HCT116 (cell line): ENCODE measurements at regions of chr2 and their contacts with region 1.

Region 1: GRCh38 chr2:135052042-135052876 is at the start of gene RAB3GAP1:
- DNase-seq: peak; percentile 48
- ATAC-seq: peak; percentile 94
- H3K4me3 ChIP-seq: peak within 1 kb of the TSS; percentile 93 to 94
- H3K27ac ChIP-seq: peak within 1 kb of the TSS; percentile 68
- H3K4me1 ChIP-seq: peaks cover 9 to 12% of the 10 kb centered on the region in 2 experiments; a peak in 2 of 4 replicates
- H3K27me3 ChIP-seq: no peaks in the 10 kb centered on the region
- CTCF ChIP-seq: no peak
- POLR2A ChIP-seq: peak; percentile 85
- RAD21 ChIP-seq: no peak
- total RNA-seq, gene RAB3GAP1: 38.5 TPM

Region 2: DNA sequence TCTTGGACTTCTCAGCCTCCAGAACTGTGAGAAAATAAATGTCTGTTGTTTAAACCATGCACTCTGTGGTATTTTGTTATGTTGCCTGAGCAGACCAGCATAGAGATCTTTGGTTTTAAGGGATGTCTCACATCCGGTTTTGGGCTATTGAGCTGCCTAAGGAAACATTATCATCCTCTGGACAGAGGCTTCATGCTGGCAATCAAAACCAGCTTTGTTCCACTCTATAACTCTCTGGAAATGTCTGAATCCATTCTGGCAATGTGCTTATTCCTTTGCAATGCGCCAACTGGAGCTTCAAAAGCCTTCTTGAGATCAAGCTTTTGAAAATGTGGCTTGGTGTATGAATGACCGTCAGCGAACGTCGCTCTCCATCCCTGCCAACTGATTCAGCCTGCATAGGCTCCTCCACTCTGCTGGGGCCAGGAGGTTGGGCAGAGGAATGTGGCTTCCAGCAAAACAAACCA is 981.9 kb before region 1 on chr2:
- CTCF ChIA-PET with region 1: no interaction called
- POLR2A ChIA-PET with region 1: no interaction called
- RAD21 ChIA-PET with region 1: no interaction called
- intact Hi-C with region 1: no loop called
- DNase-seq: no peak
- ATAC-seq: no peak
- H3K4me3 ChIP-seq: no peak overlapping the region
- H3K27ac ChIP-seq: no peak overlapping the region
- H3K4me1 ChIP-seq: no peaks in the 10 kb centered on the region
- H3K27me3 ChIP-seq: peaks cover 9% of the 10 kb centered on the region; the same call in 1 of the 2 replicates
- CTCF ChIP-seq: no peak
- POLR2A ChIP-seq: no peak
- RAD21 ChIP-seq: no peak

Region 3: GRCh38 chr2:135072125-135072997 is 20.1 kb after region 1 on chr2:
- CTCF ChIA-PET with region 1: no interaction called
- POLR2A ChIA-PET with region 1: no interaction called
- RAD21 ChIA-PET with region 1: no interaction called
- intact Hi-C with region 1: no loop called
- DNase-seq: peak; percentile 31
- ATAC-seq: no peak
- H3K4me3 ChIP-seq: no peak overlapping the region
- H3K27ac ChIP-seq: no peak overlapping the region
- H3K4me1 ChIP-seq: no peaks in the 10 kb centered on the region
- H3K27me3 ChIP-seq: no peaks in the 10 kb centered on the region
- CTCF ChIP-seq: no peak
- POLR2A ChIP-seq: no peak
- RAD21 ChIP-seq: no peak

Region 4: GRCh38 chr2:135099802-135100483 is 47.7 kb after region 1 on chr2:
- CTCF ChIA-PET with region 1: no interaction called
- POLR2A ChIA-PET with region 1: no interaction called
- RAD21 ChIA-PET with region 1: no interaction called
- intact Hi-C with region 1: no loop called
- DNase-seq: no peak
- ATAC-seq: no peak
- H3K4me3 ChIP-seq: no peak overlapping the region
- H3K27ac ChIP-seq: no peak overlapping the region
- H3K4me1 ChIP-seq: no peaks in the 10 kb centered on the region
- H3K27me3 ChIP-seq: no peaks in the 10 kb centered on the region
- CTCF ChIP-seq: no peak
- POLR2A ChIP-seq: no peak
- RAD21 ChIP-seq: no peak

Region 5: GRCh38 chr2:135531231-135532228 is 479.3 kb after region 1 on chr2 and contains the start of gene R3HDM1:
- CTCF ChIA-PET with region 1: no interaction called
- POLR2A ChIA-PET with region 1: no interaction called
- RAD21 ChIA-PET with region 1: no interaction called
- intact Hi-C with region 1: loop called (anchors 5 kb)
- DNase-seq: peak; percentile 100
- ATAC-seq: peak; percentile 85
- H3K4me3 ChIP-seq: peak within 1 kb of the TSS; percentile 80 to 89
- H3K27ac ChIP-seq: peak within 1 kb of the TSS; percentile 71
- H3K4me1 ChIP-seq: peaks cover 7 to 24% of the 10 kb centered on the region in 2 experiments
- H3K27me3 ChIP-seq: no peaks in the 10 kb centered on the region
- CTCF ChIP-seq: no peak
- POLR2A ChIP-seq: peak; percentile 48
- RAD21 ChIP-seq: peak; percentile 48
- total RNA-seq, gene R3HDM1: 43.1 TPM

Region 6: GRCh38 chr2:135638825-135639224 is 586.6 kb after region 1 on chr2:
- CTCF ChIA-PET with region 1: no interaction called
- POLR2A ChIA-PET with region 1: no interaction called
- RAD21 ChIA-PET with region 1: no interaction called
- intact Hi-C with region 1: no loop called
- DNase-seq: no peak
- ATAC-seq: no peak
- H3K4me3 ChIP-seq: no peak overlapping the region
- H3K27ac ChIP-seq: no peak overlapping the region
- H3K4me1 ChIP-seq: no peaks in the 10 kb centered on the region
- H3K27me3 ChIP-seq: no peaks in the 10 kb centered on the region
- CTCF ChIP-seq: no peak
- POLR2A ChIP-seq: no peak
- RAD21 ChIP-seq: no peak